ENCODE measurements at regions of chr12 and their contacts with region 1.

Region 1: DNA sequence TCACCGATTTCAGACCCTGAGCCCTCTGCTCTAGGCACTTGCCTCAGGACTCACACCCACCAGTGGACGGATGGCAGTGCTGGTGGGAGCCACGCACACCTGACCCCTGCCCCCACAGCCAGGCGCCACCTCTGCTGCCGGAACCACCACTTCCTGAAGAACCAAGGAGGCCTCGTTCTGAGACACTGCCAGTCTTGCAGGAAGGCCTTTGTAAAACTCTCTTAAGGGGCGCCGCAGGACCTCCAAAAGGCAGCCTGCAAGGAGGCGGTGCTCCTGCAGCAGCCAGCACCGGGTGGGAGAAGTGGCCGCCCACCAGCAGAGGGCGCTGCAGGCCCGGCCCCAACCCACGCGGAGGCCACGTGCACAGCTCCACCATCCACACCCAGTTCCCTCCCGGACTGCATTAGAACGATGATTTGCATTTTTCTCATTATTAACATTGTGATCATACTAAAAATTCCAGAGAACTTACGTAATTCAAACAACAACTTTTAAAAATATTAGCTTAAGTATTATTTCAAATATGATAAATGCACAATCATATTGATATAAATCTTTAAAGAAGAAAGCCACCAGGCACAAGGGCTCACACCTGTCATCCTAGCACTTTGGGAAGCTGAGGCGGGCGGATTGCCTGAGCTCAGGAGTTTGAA is 12.8 kb downstream of the STX2 start:
- DNase-seq: peak; percentile 70
- H3K4me3 Mint-ChIP-seq: no peak overlapping the region
- H3K27ac Mint-ChIP-seq: no peak overlapping the region
- H3K4me1 Mint-ChIP-seq: peaks cover 10% of the 10 kb centered on the region
- H3K27me3 Mint-ChIP-seq: no peaks in the 10 kb centered on the region

Region 2: GRCh38 chr12:130838951-130839769 is 12.9 kb after region 1 on chr12 and contains the start of gene STX2:
- CTCF ChIA-PET with region 1: interaction called, 29 read pairs
- intact Hi-C with region 1: no loop called
- DNase-seq: peak; percentile 84
- H3K4me3 Mint-ChIP-seq: peak within 1 kb of the TSS; percentile 78
- H3K27ac Mint-ChIP-seq: peak within 1 kb of the TSS; percentile 21
- H3K4me1 Mint-ChIP-seq: peaks cover 29% of the 10 kb centered on the region
- H3K27me3 Mint-ChIP-seq: no peaks in the 10 kb centered on the region
- total RNA-seq, gene STX2: 10.8 to 13.6 TPM

Region 3: DNA sequence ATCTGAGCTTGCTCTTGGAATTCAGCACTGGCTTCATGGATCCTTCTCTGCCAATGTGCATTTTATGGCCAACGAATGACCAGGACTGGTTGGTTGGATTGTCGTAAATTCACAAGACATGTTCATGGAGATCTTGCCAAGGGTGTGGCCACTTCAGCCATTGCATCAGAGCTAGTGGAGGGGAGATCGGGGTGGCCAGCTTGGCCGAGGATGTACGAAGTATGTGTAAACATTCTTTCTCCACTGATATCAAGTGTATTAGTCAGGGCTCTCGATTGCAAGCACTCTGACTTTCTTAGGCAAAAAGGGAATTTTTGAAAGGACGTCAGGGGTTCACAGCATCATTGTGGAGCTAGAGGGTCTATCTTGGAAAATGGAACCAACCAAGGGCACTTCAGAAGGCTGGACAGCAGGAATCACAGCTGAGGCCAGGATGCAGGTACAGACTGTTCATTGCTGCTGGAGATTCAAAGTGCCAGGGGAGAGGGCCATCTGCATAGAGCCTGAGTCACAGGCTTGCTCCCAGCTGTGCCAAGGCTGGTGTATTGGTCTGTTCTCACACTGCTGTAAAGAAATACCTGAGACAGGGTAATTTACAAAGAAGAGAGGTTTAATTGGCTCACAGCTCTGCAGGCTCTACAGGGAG is 94.6 kb after region 1 on chr12:
- CTCF ChIA-PET with region 1: no interaction called
- intact Hi-C with region 1: no loop called
- DNase-seq: no peak
- H3K4me3 Mint-ChIP-seq: no peak overlapping the region
- H3K27ac Mint-ChIP-seq: no peak overlapping the region
- H3K4me1 Mint-ChIP-seq: no peaks in the 10 kb centered on the region
- H3K27me3 Mint-ChIP-seq: peaks cover 53% of the 10 kb centered on the region

Region 4: GRCh38 chr12:131536337-131536736 is 710.1 kb after region 1 on chr12:
- CTCF ChIA-PET with region 1: no interaction called
- intact Hi-C with region 1: no loop called
- DNase-seq: peak; percentile 61
- H3K4me3 Mint-ChIP-seq: no peak overlapping the region
- H3K27ac Mint-ChIP-seq: no peak overlapping the region
- H3K4me1 Mint-ChIP-seq: peaks cover 11% of the 10 kb centered on the region
- H3K27me3 Mint-ChIP-seq: no peaks in the 10 kb centered on the region

Measured in activated naive CD4-positive, alpha-beta T cell treated with anti-CD3 and anti-CD28 coated beads for 36 hours (primary cell).